PC-3 (cell line): ENCODE measurements at regions of chr1 and their contacts with region 1.

Region 1: GRCh38 chr1:202018468-202019255 is 8.3 kb downstream of the ELF3 start:
- DNase-seq: peak; percentile 89
- ATAC-seq: peak; percentile 73
- H3K4me3 ChIP-seq: peak overlapping the region; percentile 49; the same call in 1 of the 2 replicates
- H3K27ac ChIP-seq: peak overlapping the region; percentile 99
- H3K4me1 ChIP-seq: peaks cover 84% of the 10 kb centered on the region
- H3K27me3 ChIP-seq: no peaks in the 10 kb centered on the region
- CTCF ChIP-seq: no peak

Region 2: DNA sequence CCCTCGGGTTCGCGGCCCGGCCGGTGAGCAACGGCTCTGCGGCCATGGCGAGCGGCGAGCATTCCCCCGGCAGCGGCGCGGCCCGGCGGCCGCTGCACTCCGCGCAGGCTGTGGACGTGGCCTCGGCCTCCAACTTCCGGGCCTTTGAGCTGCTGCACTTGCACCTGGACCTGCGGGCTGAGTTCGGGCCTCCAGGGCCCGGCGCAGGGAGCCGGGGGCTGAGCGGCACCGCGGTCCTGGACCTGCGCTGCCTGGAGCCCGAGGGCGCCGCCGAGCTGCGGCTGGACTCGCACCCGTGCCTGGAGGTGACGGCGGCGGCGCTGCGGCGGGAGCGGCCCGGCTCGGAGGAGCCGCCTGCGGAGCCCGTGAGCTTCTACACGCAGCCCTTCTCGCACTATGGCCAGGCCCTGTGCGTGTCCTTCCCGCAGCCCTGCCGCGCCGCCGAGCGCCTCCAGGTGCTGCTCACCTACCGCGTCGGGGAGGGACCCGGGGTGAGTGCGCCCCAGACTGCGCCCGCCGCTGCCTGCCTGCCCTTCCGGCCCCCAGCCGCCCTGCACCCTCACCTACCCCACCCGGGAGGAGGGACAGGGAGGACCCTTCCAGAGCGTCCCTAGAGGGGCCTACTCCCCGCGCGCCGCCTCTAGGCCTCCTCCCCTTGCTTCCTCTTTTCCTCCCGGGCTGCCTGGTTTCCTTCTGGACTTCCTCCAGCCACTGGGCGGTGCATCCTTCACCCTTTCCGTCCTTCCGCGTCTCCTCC is 35.9 kb before region 1 on chr1 and contains the start of gene RNPEP:
- CTCF ChIA-PET with region 1: interaction called, 11 read pairs
- POLR2A ChIA-PET with region 1: no interaction called
- intact Hi-C with region 1: no loop called
- DNase-seq: peak; percentile 73
- ATAC-seq: peak; percentile 79
- H3K4me3 ChIP-seq: peak within 1 kb of the TSS; percentile 96
- H3K27ac ChIP-seq: peak within 1 kb of the TSS; percentile 31
- H3K4me1 ChIP-seq: peaks cover 11% of the 10 kb centered on the region; the same call in 1 of the 2 replicates
- H3K27me3 ChIP-seq: no peaks in the 10 kb centered on the region
- CTCF ChIP-seq: peak; percentile 22; the same call in 1 of the 2 replicates
- total RNA-seq, gene RNPEP: 64.7 and 74.8 TPM in 2 replicates

Region 3: GRCh38 chr1:202029171-202029665 is 10.6 kb after region 1 on chr1:
- CTCF ChIA-PET with region 1: interaction called, 7 read pairs
- POLR2A ChIA-PET with region 1: interaction called, 9 read pairs
- intact Hi-C with region 1: loop called (anchors 1 kb)
- DNase-seq: peak; percentile 88
- ATAC-seq: peak; percentile 92
- H3K4me3 ChIP-seq: no peak overlapping the region
- H3K27ac ChIP-seq: peak overlapping the region; percentile 95
- H3K4me1 ChIP-seq: peaks cover 28% of the 10 kb centered on the region
- H3K27me3 ChIP-seq: no peaks in the 10 kb centered on the region
- CTCF ChIP-seq: no peak

Region 4: GRCh38 chr1:202034683-202035462 is 16.2 kb after region 1 on chr1:
- CTCF ChIA-PET with region 1: interaction called, 7 read pairs
- POLR2A ChIA-PET with region 1: interaction called, 9 read pairs
- intact Hi-C with region 1: loop called (anchors 2 kb)
- DNase-seq: peak; percentile 95
- ATAC-seq: peak; percentile 93
- H3K4me3 ChIP-seq: peak overlapping the region; percentile 28; the same call in 1 of the 2 replicates
- H3K27ac ChIP-seq: peak overlapping the region; percentile 99
- H3K4me1 ChIP-seq: peaks cover 33% of the 10 kb centered on the region
- H3K27me3 ChIP-seq: no peaks in the 10 kb centered on the region
- CTCF ChIP-seq: no peak

Region 5: GRCh38 chr1:202058001-202058913 is 39.6 kb after region 1 on chr1:
- CTCF ChIA-PET with region 1: interaction called, 4 read pairs
- POLR2A ChIA-PET with region 1: no interaction called
- intact Hi-C with region 1: loop called (anchors 1 kb)
- DNase-seq: peak; percentile 81
- ATAC-seq: peak; percentile 77
- H3K4me3 ChIP-seq: no peak overlapping the region; the same call in 1 of the 2 replicates
- H3K27ac ChIP-seq: peak overlapping the region; percentile 98
- H3K4me1 ChIP-seq: peaks cover 31% of the 10 kb centered on the region
- H3K27me3 ChIP-seq: no peaks in the 10 kb centered on the region
- CTCF ChIP-seq: no peak